ENCODE measurements at regions of chr7 and their contacts with region 1.

Region 1: GRCh38 chr7:6577365-6578113 is at the start of gene ZDHHC4:
- DNase-seq: peak; percentile 94
- ATAC-seq: peak; percentile 97
- H3K4me3 Mint-ChIP-seq: peak within 1 kb of the TSS; percentile 83
- H3K27ac Mint-ChIP-seq: peak within 1 kb of the TSS; percentile 88
- H3K4me1 Mint-ChIP-seq: peaks cover 25% of the 10 kb centered on the region
- H3K27me3 Mint-ChIP-seq: no peaks in the 10 kb centered on the region
- total RNA-seq, gene ZDHHC4: 30.1 to 34.1 TPM

Region 2: DNA sequence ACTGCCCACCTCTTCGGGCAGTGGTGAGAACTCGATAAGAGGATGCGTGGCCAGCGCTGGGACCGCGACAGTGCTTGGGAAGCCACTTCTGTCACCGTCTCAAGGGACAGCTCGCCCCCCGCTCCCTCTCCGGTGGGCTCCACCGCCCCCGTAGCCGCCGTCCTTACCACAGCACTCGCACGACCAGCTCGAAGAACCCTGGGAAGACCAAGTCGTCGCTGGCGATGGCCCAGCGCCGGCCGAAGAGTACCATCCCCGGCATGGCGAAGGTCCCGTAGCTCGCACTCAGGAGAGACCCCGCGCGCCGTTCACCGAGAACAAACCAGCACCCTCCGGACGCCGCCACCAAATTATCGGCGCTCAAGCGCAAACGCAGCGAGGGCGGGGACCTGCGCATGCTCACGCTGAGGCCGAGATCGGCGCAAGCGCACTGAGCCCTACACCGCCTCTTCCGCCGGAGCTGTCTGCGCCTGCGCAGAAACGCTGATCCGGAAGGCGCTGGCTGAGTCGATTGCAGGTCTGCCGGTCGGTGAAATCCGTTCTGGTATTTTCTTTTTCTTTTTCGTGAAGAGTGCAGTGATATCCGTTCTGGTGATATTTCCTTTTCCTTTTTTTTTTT is 129.8 kb before region 1 on chr7 and contains the start of gene DAGLB:
- CTCF ChIA-PET with region 1: no interaction called
- POLR2A ChIA-PET with region 1: no interaction called
- intact Hi-C with region 1: loop called in 1 of 2 experiments (anchors 1 kb)
- DNase-seq: peak; percentile 98
- ATAC-seq: peak; percentile 87
- H3K4me3 Mint-ChIP-seq: peak within 1 kb of the TSS; percentile 94
- H3K27ac Mint-ChIP-seq: peak within 1 kb of the TSS; percentile 89
- H3K4me1 Mint-ChIP-seq: peaks cover 37% of the 10 kb centered on the region
- H3K27me3 Mint-ChIP-seq: no peaks in the 10 kb centered on the region
- total RNA-seq, gene DAGLB: 9.8 to 15.2 TPM

Region 3: DNA sequence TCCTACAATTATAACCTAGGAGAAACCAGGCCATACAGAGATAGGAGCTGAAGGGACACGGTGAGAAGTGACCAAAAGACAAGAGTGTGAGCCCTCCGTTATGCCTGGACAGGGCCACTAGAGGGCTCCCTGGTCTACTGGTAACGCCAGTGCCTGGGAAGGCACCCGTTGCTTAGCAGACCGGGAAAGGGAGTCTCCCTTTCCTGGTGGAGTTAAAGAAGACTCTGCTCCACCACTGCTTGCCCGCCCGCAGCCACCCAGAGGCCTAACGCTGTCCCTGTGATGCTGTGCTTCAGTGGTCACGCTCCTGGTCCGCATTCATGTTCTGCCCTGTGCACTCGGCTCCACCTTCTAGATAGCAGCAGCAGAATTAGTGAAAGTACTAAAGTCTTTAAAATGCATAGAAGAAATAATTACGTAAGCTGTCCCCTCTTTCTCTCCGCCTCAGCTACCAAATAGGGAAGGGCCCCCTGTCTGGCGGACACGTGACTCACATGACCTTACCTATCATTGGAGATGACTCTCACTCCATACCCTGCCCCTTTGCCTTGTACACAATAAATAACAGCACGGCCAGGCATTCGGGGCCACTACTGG is 61.1 kb before region 1 on chr7:
- CTCF ChIA-PET with region 1: interaction called, 8 read pairs
- POLR2A ChIA-PET with region 1: no interaction called
- intact Hi-C with region 1: loop called in 1 of 2 experiments (anchors 2 kb)
- DNase-seq: peak; percentile 80
- ATAC-seq: peak; percentile 75
- H3K4me3 Mint-ChIP-seq: peak overlapping the region; percentile 71
- H3K27ac Mint-ChIP-seq: peak overlapping the region; percentile 6
- H3K4me1 Mint-ChIP-seq: peaks cover 9% of the 10 kb centered on the region
- H3K27me3 Mint-ChIP-seq: peaks cover 2% of the 10 kb centered on the region

Region 4: GRCh38 chr7:6637544-6638229 is 60.1 kb after region 1 on chr7:
- CTCF ChIA-PET with region 1: interaction called, 3 read pairs
- POLR2A ChIA-PET with region 1: no interaction called
- intact Hi-C with region 1: loop called in 1 of 2 experiments (anchors 1 kb)
- DNase-seq: peak; percentile 67
- ATAC-seq: peak; percentile 62
- H3K4me3 Mint-ChIP-seq: peak overlapping the region; percentile 81
- H3K27ac Mint-ChIP-seq: peak overlapping the region; percentile 84
- H3K4me1 Mint-ChIP-seq: peaks cover 26% of the 10 kb centered on the region
- H3K27me3 Mint-ChIP-seq: no peaks in the 10 kb centered on the region

Region 5: GRCh38 chr7:6706677-6707544 is 129.4 kb after region 1 on chr7 and contains the start of gene ZNF12:
- CTCF ChIA-PET with region 1: no interaction called
- POLR2A ChIA-PET with region 1: no interaction called
- intact Hi-C with region 1: loop called in 1 of 2 experiments (anchors 1 kb)
- DNase-seq: peak; percentile 98
- ATAC-seq: peak; percentile 95
- H3K4me3 Mint-ChIP-seq: peak within 1 kb of the TSS; percentile 86
- H3K27ac Mint-ChIP-seq: peak within 1 kb of the TSS; percentile 86
- H3K4me1 Mint-ChIP-seq: peaks cover 36% of the 10 kb centered on the region
- H3K27me3 Mint-ChIP-seq: no peaks in the 10 kb centered on the region
- total RNA-seq, gene ZNF12: 22.4 to 23.2 TPM